Activated naive CD4-positive, alpha-beta T cell treated with anti-CD3 and anti-CD28 coated beads for 36 hours (primary cell): ENCODE measurements at regions of chr1 and their contacts with region 1.

Region 1: DNA sequence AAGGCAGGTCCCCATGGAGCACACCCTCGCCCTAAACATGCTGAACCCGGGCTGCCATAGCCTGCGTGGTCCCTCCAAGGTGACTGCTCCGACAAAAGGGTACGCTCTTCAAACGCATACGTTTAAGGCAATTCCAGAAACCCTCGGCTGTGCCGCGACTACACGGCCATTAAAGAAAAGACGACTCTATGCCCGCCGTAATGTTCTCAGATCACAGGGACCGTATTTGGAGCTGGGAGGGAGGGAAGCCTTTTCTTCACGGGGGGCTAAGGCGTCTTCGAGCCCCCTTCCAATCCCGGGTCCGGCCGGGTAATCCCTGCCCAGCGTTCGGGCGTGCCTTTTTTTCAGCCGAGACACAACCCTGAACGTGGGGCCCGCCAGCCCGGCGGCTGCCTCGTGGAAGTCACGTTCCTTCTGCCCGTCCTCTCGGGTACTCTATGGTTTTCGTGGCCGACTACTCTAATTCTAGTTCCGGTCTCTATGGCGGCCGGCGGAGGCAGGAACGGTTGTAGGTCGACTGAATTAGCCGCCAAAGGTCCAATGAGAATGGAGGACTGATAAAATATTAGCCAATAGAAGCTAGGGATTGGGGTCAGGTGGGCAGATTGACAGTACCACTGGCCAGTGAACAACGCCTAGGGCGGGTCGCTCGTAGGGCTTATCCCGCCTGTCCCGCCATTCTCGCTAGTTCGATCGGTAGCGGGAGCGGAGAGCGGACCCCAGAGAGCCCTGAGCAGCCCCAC is at the start of gene YBX1:
- DNase-seq: peak; percentile 97
- H3K4me3 Mint-ChIP-seq: peak within 1 kb of the TSS; percentile 97
- H3K27ac Mint-ChIP-seq: peak within 1 kb of the TSS; percentile 97
- H3K4me1 Mint-ChIP-seq: peaks cover 42% of the 10 kb centered on the region
- H3K27me3 Mint-ChIP-seq: no peaks in the 10 kb centered on the region
- total RNA-seq, gene YBX1: 1,773 to 1,887 TPM

Region 2: GRCh38 chr1:42282024-42282579 is 399.8 kb before region 1 on chr1:
- CTCF ChIA-PET with region 1: no interaction called
- intact Hi-C with region 1: loop called (anchors 5 kb)
- DNase-seq: no peak
- H3K4me3 Mint-ChIP-seq: no peak overlapping the region
- H3K27ac Mint-ChIP-seq: no peak overlapping the region
- H3K4me1 Mint-ChIP-seq: peaks cover 57% of the 10 kb centered on the region
- H3K27me3 Mint-ChIP-seq: no peaks in the 10 kb centered on the region

Region 3: DNA sequence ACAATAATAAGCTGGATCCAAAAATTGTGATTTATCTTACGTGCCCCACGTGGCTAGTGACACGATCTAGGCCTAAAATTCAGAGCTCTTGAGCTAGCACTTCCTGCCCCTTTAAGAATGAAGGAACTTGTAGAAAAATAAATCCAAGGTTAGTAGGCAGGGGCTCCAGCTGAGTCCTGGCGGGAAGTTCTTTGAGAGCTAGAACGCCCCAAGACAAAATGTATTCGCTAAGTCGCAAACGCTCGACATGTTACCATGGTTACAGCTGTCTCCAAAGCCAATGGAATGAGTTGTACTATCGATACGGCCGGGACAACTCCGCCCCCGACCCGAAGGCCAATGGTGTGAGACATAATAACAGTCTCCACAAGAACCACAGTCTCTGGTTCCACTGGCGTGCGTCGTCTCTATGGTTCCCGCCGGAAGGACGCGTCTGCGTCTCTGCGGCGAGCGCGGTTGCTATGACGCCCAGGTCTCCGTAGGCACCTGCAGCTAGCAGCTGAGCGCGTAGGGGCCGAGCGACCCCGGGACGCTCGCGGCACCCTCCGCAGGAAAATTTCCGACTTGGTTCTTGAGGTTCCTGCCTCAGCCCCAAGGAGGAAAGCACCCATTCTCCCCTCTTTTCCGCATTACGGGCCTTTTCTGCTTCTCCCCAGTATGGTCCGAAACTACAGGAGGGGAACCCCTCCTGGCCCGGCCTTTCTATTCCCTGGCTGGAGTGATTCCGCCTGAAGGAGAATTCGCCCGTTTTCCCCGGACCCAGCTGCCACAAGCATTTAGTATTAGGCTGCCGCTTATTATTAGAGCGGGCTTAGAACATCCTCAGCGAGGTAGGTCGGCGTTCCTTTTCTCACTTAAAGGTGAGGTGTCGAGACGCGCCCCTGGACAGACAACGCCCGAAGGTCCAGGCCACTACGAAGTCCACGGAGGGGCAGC is 218.8 kb before region 1 on chr1 and contains the start of gene CCDC30:
- CTCF ChIA-PET with region 1: no interaction called
- intact Hi-C with region 1: loop called (anchors 2 kb)
- DNase-seq: peak; percentile 97
- H3K4me3 Mint-ChIP-seq: peak within 1 kb of the TSS; percentile 77
- H3K27ac Mint-ChIP-seq: peak within 1 kb of the TSS; percentile 34
- H3K4me1 Mint-ChIP-seq: peaks cover 32% of the 10 kb centered on the region
- H3K27me3 Mint-ChIP-seq: no peaks in the 10 kb centered on the region
- total RNA-seq, gene CCDC30: 1.4 to 2.1 TPM

Region 4: DNA sequence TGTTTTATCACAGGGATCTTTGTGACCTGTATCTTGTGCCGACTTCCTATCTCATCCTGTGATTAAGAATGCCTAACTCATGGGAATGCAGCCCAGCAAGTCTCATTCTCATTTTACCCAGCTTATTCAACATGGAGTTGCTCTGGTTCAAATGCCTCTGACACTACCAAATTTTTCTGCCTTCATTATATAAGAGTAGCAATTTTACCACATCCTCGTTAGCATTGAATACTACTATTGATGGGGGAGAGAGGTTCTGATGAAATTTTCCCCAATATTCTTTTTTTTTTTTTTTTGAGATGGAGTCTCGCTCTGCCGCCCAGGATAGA is 68.1 kb before region 1 on chr1:
- CTCF ChIA-PET with region 1: no interaction called
- intact Hi-C with region 1: no loop called
- DNase-seq: no peak
- H3K4me3 Mint-ChIP-seq: no peak overlapping the region
- H3K27ac Mint-ChIP-seq: no peak overlapping the region
- H3K4me1 Mint-ChIP-seq: no peaks in the 10 kb centered on the region
- H3K27me3 Mint-ChIP-seq: no peaks in the 10 kb centered on the region

Region 5: GRCh38 chr1:42657971-42658879 is 23.7 kb before region 1 on chr1 and contains the start of gene PPIH:
- CTCF ChIA-PET with region 1: no interaction called
- intact Hi-C with region 1: loop called (anchors 1 kb)
- DNase-seq: peak; percentile 97
- H3K4me3 Mint-ChIP-seq: peak within 1 kb of the TSS; percentile 98
- H3K27ac Mint-ChIP-seq: peak within 1 kb of the TSS; percentile 94
- H3K4me1 Mint-ChIP-seq: peaks cover 36% of the 10 kb centered on the region
- H3K27me3 Mint-ChIP-seq: no peaks in the 10 kb centered on the region
- total RNA-seq, gene PPIH: 107 to 108 TPM

Region 6: DNA sequence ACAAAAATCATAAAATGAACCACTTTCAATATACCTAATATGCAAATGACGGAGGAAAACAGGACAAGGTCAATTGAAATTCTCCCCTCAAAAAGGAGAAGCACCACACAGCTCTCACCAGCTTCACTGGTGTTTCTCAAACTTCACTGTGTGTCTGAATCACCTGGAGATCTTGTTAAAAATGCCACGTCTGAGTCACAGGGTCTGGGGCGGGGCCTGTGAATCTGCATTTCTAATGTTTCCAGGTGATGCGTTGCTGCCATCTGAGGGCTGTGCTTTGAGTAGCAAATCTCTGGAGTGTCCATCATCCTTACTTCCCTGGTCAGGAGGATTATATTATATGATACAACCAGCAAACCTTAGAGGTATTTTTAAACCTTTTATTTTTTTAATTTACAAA is 49.1 kb after region 1 on chr1:
- CTCF ChIA-PET with region 1: no interaction called
- intact Hi-C with region 1: no loop called
- DNase-seq: peak; percentile 87
- H3K4me3 Mint-ChIP-seq: no peak overlapping the region
- H3K27ac Mint-ChIP-seq: no peak overlapping the region
- H3K4me1 Mint-ChIP-seq: peaks cover 3% of the 10 kb centered on the region
- H3K27me3 Mint-ChIP-seq: no peaks in the 10 kb centered on the region

Region 7: GRCh38 chr1:42747125-42747524 is 65.2 kb after region 1 on chr1:
- CTCF ChIA-PET with region 1: no interaction called
- intact Hi-C with region 1: no loop called
- DNase-seq: peak; percentile 53
- H3K4me3 Mint-ChIP-seq: no peak overlapping the region
- H3K27ac Mint-ChIP-seq: no peak overlapping the region
- H3K4me1 Mint-ChIP-seq: no peaks in the 10 kb centered on the region
- H3K27me3 Mint-ChIP-seq: no peaks in the 10 kb centered on the region

Region 8: DNA sequence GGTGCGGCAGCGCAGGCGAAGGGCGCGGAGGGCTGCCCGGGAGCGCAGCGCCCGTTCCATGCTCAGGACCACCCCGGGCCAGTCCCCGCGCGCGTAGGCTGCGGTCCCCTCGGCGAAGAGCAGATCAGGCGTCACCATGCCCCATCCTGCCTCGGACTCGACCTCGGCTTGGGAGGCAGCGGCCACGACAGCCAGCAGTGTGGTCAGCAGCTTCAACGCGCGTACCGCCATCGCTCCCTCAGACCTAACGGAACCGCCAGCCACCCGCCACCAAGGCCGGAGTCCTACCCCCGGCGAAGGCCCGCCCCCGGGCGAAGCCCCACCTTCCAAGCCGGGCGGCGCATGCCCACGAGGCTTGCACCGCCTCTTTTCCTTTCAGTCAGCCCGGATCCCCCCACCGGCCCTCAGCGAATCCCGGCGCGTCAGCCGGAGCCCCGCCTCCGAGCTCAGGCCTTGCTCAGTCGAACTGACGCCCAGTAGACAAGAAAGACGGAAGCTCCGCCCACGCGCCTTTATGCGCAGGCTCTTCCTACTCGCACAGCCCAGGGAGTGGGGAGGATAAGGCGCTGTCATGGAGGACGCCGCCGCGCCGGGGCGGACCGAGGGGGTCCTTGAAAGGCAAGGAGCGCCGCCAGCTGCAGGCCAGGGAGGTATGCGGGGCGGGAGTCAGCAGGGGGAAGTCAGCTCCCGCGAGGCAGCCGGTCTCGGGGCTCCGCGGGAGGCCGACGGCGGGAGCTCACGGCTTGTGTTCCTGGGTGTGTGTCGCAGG is 85.0 kb after region 1 on chr1 and contains the starts of genes C1orf50 and P3H1:
- CTCF ChIA-PET with region 1: interaction called, 3 read pairs
- intact Hi-C with region 1: loop called (anchors 1 kb)
- DNase-seq: peak; percentile 100
- H3K4me3 Mint-ChIP-seq: no peak within 1 kb of the TSS
- H3K27ac Mint-ChIP-seq: peak within 1 kb of the TSS; percentile 83
- H3K4me1 Mint-ChIP-seq: peaks cover 35% of the 10 kb centered on the region
- H3K27me3 Mint-ChIP-seq: no peaks in the 10 kb centered on the region
- total RNA-seq, gene C1orf50: 4.1 to 4.7 TPM
- total RNA-seq, gene P3H1: 26.4 to 28.6 TPM

Region 9: GRCh38 chr1:42846257-42847110 is 164.6 kb after region 1 on chr1 and contains the start of gene ZNF691:
- CTCF ChIA-PET with region 1: no interaction called
- intact Hi-C with region 1: loop called (anchors 10 kb)
- DNase-seq: peak; percentile 95
- H3K4me3 Mint-ChIP-seq: peak within 1 kb of the TSS; percentile 82
- H3K27ac Mint-ChIP-seq: peak within 1 kb of the TSS; percentile 74
- H3K4me1 Mint-ChIP-seq: peaks cover 28% of the 10 kb centered on the region
- H3K27me3 Mint-ChIP-seq: no peaks in the 10 kb centered on the region
- total RNA-seq, gene ZNF691: 4.6 to 5.3 TPM

Region 10: DNA sequence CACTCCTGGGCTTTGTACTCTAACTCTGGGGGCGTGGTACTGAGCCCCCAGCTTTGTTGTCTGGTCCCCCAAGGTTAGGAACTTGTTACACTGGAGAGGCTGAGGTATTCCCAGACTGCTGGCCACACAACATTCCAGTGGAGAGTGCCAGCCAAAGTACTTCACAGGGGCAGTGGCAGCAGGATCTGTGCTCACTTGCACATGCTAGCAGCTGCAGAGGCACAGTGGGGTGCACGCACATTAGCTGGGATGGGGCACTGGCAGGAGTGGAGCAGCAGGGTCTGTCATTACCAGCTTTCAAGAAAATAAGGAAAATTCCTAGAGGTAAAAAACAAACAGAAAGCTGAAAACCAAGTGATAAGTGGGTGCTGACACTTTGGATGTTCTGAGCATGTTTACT is 195.5 kb after region 1 on chr1:
- CTCF ChIA-PET with region 1: no interaction called
- intact Hi-C with region 1: no loop called
- DNase-seq: no peak
- H3K4me3 Mint-ChIP-seq: no peak overlapping the region
- H3K27ac Mint-ChIP-seq: no peak overlapping the region
- H3K4me1 Mint-ChIP-seq: no peaks in the 10 kb centered on the region
- H3K27me3 Mint-ChIP-seq: peaks cover 2% of the 10 kb centered on the region

Region 11: DNA sequence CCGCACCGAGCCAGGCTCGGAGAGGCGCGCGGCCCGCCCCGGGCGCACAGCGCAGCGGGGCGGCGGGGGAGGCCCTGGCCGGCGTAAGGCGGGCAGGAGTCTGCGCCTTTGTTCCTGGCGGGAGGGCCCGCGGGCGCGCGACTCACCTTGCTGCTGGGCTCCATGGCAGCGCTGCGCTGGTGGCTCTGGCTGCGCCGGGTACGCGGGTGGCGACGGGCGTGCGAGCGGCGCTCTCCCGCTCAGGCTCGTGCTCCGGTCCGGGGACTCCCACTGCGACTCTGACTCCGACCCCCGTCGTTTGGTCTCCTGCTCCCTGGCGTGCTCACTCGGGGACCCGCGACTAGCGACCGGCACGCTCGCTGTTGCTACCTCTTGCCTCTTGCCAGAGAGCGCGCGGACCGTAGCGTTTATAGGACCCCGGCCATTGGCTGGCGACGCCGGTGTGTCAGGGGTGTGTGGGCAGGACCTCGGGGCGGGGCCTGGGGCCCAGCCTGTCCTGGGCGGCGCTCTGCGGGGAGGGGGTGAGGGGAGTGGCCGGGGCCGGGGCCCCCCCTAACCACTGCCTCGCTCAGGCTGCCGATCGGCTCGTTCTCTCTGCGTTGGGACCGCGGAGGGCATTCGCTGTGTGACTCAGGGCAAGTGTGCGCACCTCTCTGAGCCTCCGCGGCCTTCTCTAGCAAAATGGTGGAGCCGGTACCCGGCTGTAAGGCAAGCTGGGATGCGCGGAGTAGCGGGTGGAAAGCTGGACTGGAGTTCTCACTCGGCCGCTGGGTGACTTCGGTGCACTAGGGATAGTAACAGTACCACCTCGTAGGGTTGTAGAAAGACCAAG is 276.8 kb after region 1 on chr1 and contains the start of gene SLC2A1:
- CTCF ChIA-PET with region 1: no interaction called
- intact Hi-C with region 1: loop called (anchors 1 kb)
- DNase-seq: peak; percentile 97
- H3K4me3 Mint-ChIP-seq: peak within 1 kb of the TSS; percentile 97
- H3K27ac Mint-ChIP-seq: peak within 1 kb of the TSS; percentile 96
- H3K4me1 Mint-ChIP-seq: peaks cover 45% of the 10 kb centered on the region
- H3K27me3 Mint-ChIP-seq: no peaks in the 10 kb centered on the region
- total RNA-seq, gene SLC2A1: 21.2 to 22.7 TPM